ENCODE measurements at regions of chr16 and their contacts with region 1.

Region 1: DNA sequence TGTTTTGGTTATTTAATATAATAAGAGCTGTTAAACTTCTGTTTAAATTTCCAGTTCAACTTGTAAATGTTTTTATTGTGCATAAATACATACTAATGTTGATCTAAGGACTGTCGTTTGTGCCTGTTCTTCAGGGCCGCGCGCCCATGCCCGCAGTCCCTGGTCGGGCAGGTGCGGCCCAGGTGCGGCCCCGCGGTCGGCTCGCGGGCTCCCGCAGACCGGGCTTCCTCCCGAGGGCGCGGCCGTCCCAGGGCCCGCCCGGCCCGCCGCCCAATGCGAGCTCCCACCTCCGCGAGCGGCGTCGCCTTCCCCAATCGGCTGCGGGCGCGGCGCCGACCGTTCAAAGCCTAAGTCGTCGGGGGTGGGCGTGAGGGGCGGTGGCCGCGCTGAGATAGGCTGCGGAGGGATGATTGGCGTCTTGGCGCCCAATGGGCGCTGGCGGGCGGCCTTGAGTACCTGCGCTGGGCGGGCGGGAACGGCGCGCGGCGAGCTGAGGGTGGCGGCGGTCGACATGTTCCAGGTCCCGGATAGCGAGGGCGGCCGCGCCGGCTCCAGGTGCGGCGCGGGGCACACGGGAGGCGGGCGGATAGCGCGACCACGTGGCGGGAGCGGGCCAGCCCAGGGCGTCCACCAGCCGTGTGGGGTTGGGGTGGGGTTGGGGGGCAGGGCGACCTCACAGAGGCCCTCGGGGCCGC is at the start of gene JPT2:
- DNase-seq: peak; percentile 100
- CTCF ChIP-seq: no peak

Region 2: GRCh38 chr16:1696863-1697262 is 18.9 kb after region 1 on chr16:
- CTCF ChIA-PET with region 1: interaction called, 12 read pairs
- POLR2A ChIA-PET with region 1: no interaction called
- DNase-seq: no peak
- CTCF ChIP-seq: no peak

Region 3: DNA sequence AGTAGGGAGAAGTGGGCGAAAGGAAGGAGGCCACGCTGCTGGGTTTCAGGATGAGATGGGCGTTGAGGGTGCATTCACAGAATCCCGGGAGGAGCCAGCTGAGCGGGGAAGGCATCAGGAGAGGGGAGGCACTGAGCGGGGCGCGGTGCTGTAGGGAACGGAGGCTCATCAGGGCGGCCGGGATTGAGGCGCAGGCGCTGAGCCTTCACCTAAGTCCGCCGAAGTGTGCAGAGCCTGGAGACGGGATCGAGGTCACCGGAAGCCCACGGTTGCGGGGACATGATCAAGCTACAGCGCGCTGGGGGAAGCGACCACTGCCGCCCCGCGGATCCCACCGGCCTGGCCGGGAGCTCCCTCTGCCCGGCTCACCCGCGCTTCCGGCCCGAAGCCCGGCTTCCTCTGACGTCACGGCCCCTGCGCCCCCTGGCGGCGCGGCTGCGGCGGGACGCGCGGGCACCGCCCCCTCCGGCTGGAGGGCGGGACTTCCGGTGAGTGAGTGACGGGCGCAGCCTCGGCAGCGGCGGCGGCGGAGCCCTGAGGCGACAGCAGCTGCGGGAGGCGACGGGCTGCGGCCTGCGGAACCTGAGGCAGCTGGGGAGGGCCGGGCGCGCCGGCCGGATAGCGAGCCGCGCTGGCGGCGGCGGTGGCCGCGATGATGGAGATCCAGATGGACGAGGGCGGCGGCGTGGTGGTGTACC is 27.9 kb after region 1 on chr16 and contains the start of gene MAPK8IP3:
- CTCF ChIA-PET with region 1: interaction called, 36 read pairs
- POLR2A ChIA-PET with region 1: interaction called, 3 read pairs
- DNase-seq: peak; percentile 99
- CTCF ChIP-seq: peak; percentile 99

Region 4: GRCh38 chr16:1723450-1724147 is 45.6 kb after region 1 on chr16:
- CTCF ChIA-PET with region 1: interaction called, 14 read pairs
- POLR2A ChIA-PET with region 1: no interaction called
- DNase-seq: peak; percentile 64
- CTCF ChIP-seq: peak; percentile 71

Region 5: DNA sequence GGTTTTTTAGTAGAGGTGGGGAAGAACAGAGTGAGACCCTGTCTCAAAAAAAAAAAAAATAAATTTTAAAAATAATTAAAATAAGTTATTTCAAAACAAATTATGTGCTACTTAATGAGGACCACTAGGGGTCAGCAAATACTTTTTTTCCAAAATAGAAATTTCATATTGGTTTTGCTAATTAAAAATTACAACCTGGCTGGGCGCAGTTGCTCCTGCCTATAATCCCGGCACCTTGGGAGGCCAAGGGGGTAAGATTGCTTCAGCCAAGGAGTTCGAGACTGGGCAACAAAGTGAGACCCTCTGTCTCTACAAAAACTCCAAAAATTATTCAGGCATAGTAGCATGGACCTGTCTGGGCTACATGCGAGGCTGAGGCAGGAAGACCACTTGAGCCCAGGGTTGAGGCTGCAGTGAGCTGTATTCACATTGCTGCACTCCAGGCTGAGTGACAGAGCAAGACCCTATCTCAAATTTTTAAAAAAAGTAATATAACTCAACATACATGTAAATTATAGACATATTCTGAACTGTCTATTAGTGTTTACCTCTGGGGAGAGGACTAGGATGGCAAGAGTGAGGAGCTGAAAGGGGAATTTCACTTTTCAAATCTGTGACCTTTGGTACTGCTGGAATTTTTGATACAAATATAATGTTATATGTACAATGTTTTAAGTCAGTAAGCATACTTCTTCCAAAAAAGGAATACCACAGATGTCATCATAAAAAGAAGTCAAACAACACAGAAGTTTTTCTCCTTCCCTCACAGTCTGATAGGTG is 185.9 kb after region 1 on chr16:
- CTCF ChIA-PET with region 1: no interaction called
- POLR2A ChIA-PET with region 1: no interaction called
- DNase-seq: no peak
- CTCF ChIP-seq: peak; percentile 30

Measured in GM10248 (cell line).